Transverse colon (tissue), 4 donors: ENCODE measurements at regions of chr15 and their contacts with region 1.

Region 1: GRCh38 chr15:57146506-57147201 is 228.2 kb downstream of the TCF12 start:
- DNase-seq: no peak
- H3K4me3 ChIP-seq: no peak overlapping the region
- H3K27ac ChIP-seq: peak overlapping the region; percentile 1 to 49 (median 24)
- H3K4me1 ChIP-seq: peaks cover 0 to 35% (median 15%) of the 10 kb centered on the region in 4 donors
- H3K27me3 ChIP-seq: no peaks in the 10 kb centered on the region
- CTCF ChIP-seq: peak; percentile 64 to 73 (median 68)
- EP300 ChIP-seq: no peak
- POLR2A ChIP-seq: no peak

Region 2: GRCh38 chr15:56491110-56491722 is 655.4 kb before region 1 on chr15:
- in situ Hi-C with region 1: loop called in 1 of 4 experiments (anchors 25 kb)
- intact Hi-C with region 1: no loop called
- DNase-seq: peak; percentile 74
- H3K4me3 ChIP-seq: no peak overlapping the region
- H3K27ac ChIP-seq: no peak overlapping the region
- H3K4me1 ChIP-seq: peaks cover 0 to 23% (median 0%) of the 10 kb centered on the region in 4 donors
- H3K27me3 ChIP-seq: no peaks in the 10 kb centered on the region
- CTCF ChIP-seq: peak; percentile 66 to 81 (median 73)
- EP300 ChIP-seq: no peak
- POLR2A ChIP-seq: no peak

Region 3: DNA sequence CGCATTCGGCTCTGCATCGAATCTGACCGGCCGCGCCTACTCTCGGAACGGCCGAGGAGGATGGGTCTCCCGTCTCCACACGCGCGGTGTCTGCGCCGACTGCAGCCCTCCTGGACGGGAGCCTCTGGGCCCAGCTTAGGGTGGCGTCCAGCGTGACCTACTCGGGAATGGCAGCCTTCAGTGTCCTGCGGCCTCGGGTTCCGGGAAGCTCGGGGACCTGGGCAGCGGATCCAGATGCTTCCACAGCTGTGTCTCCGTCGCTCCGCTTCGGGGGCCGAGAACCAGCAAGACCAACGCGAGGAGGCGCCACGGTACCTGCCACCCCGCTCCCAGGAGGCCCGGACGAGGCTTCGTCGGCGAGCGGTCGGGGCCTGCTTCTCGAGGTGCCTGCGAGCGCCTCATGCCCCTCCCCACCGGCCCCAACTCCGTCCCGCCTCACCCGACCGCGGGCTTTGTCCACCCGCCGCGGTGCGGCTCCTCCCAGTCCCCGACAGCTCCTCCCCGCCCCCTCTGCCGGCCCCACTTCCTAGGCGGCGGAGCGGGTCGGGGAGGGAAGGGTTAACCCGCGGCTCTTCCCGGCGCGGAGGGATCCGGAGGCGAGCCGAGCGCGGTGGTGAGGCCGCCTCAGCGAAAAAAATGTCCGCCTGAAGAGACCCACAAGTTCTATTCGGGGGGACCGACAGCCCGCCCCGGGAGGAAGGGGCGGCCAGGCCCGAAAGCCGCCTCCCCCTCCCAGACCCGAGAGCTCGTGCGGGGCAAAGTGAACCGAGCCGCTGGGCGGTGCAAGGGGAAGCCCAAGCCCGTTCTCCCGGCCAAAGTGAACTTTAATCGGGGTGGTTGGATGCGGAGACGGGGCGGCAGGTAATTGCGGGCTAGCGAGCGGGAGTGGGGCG is 228.4 kb before region 1 on chr15 and contains the start of gene TCF12:
- in situ Hi-C with region 1: loop called in 1 of 4 experiments (anchors 25 kb)
- intact Hi-C with region 1: no loop called
- DNase-seq: peak; percentile 95
- H3K4me3 ChIP-seq: peak within 1 kb of the TSS; percentile 85 to 99 (median 91)
- H3K27ac ChIP-seq: peak within 1 kb of the TSS; percentile 96 to 99 (median 98)
- H3K4me1 ChIP-seq: peaks cover 0 to 48% (median 26%) of the 10 kb centered on the region in 4 donors
- H3K27me3 ChIP-seq: no peaks in the 10 kb centered on the region
- CTCF ChIP-seq: peak; percentile 24 to 55 (median 42)
- EP300 ChIP-seq: no peak
- POLR2A ChIP-seq: peak; percentile 72
- total RNA-seq, gene TCF12: 105 to 446 (median 180) TPM

Region 4: GRCh38 chr15:57213862-57214261 is 67.2 kb after region 1 on chr15:
- in situ Hi-C with region 1: loop called in 1 of 4 experiments (anchors 10 kb)
- intact Hi-C with region 1: no loop called
- DNase-seq: no peak
- H3K4me3 ChIP-seq: no peak overlapping the region
- H3K27ac ChIP-seq: peak overlapping the region in 1 of 4 donors; percentile 19
- H3K4me1 ChIP-seq: peaks cover 2 to 52% (median 24%) of the 10 kb centered on the region in 4 donors
- H3K27me3 ChIP-seq: no peaks in the 10 kb centered on the region
- CTCF ChIP-seq: peak; percentile 40 to 51 (median 45)
- EP300 ChIP-seq: no peak
- POLR2A ChIP-seq: no peak

Region 5: GRCh38 chr15:57306161-57306943 is 159.7 kb after region 1 on chr15:
- in situ Hi-C with region 1: loop called in 3 of 4 experiments (anchors 10 kb)
- intact Hi-C with region 1: loop called (anchors 5 kb)
- DNase-seq: peak; percentile 92
- H3K4me3 ChIP-seq: peak overlapping the region; percentile 36 to 62 (median 42)
- H3K27ac ChIP-seq: peak overlapping the region; percentile 46 to 80 (median 60)
- H3K4me1 ChIP-seq: peaks cover 9 to 37% (median 21%) of the 10 kb centered on the region in 4 donors
- H3K27me3 ChIP-seq: no peaks in the 10 kb centered on the region
- CTCF ChIP-seq: peak; percentile 90 to 91 (median 90)
- EP300 ChIP-seq: no peak
- POLR2A ChIP-seq: no peak

Region 6: GRCh38 chr15:57327985-57328471 is 181.4 kb after region 1 on chr15:
- in situ Hi-C with region 1: no loop called
- intact Hi-C with region 1: no loop called
- DNase-seq: no peak
- H3K4me3 ChIP-seq: no peak overlapping the region
- H3K27ac ChIP-seq: peak overlapping the region in 1 of 4 donors; percentile 62
- H3K4me1 ChIP-seq: peaks cover 5 to 34% (median 24%) of the 10 kb centered on the region in 4 donors
- H3K27me3 ChIP-seq: no peaks in the 10 kb centered on the region
- CTCF ChIP-seq: no peak
- EP300 ChIP-seq: no peak
- POLR2A ChIP-seq: no peak